ENCODE measurements at regions of chr12 and their contacts with region 1.

Region 1: GRCh38 chr12:101939856-101940265 is 62.5 kb downstream of the DRAM1 start:
- DNase-seq: peak; percentile 83
- ATAC-seq: peak; percentile 68
- H3K4me3 ChIP-seq: no peak overlapping the region
- H3K27ac ChIP-seq: no peak overlapping the region
- H3K4me1 ChIP-seq: peaks cover 13% of the 10 kb centered on the region
- H3K27me3 ChIP-seq: no peaks in the 10 kb centered on the region
- CTCF ChIP-seq: peak; percentile 94
- POLR2A ChIP-seq: no peak
- RAD21 ChIP-seq: peak; percentile 92

Region 2: GRCh38 chr12:102095675-102096263 is 155.9 kb after region 1 on chr12:
- CTCF ChIA-PET with region 1: interaction called, 6 read pairs
- POLR2A ChIA-PET with region 1: no interaction called
- dilution Hi-C with region 1: no loop called
- in situ Hi-C with region 1: no loop called
- intact Hi-C with region 1: loop called (anchors 1 kb)
- DNase-seq: peak; percentile 61
- ATAC-seq: peak; percentile 88
- H3K4me3 ChIP-seq: no peak overlapping the region
- H3K27ac ChIP-seq: no peak overlapping the region
- H3K4me1 ChIP-seq: peaks cover 3% of the 10 kb centered on the region; the same call in 1 of the 2 replicates
- H3K27me3 ChIP-seq: no peaks in the 10 kb centered on the region
- CTCF ChIP-seq: peak; percentile 57
- POLR2A ChIP-seq: no peak
- RAD21 ChIP-seq: peak; percentile 54

Region 3: GRCh38 chr12:102169922-102170621 is 230.2 kb after region 1 on chr12:
- CTCF ChIA-PET with region 1: no interaction called
- POLR2A ChIA-PET with region 1: no interaction called
- dilution Hi-C with region 1: no loop called
- in situ Hi-C with region 1: no loop called
- intact Hi-C with region 1: loop called (anchors 5 kb)
- DNase-seq: peak; percentile 63
- ATAC-seq: peak; percentile 74
- H3K4me3 ChIP-seq: no peak overlapping the region
- H3K27ac ChIP-seq: no peak overlapping the region
- H3K4me1 ChIP-seq: peaks cover 7% of the 10 kb centered on the region
- H3K27me3 ChIP-seq: no peaks in the 10 kb centered on the region
- CTCF ChIP-seq: peak; percentile 57
- POLR2A ChIP-seq: no peak
- RAD21 ChIP-seq: peak; percentile 53

Region 4: DNA sequence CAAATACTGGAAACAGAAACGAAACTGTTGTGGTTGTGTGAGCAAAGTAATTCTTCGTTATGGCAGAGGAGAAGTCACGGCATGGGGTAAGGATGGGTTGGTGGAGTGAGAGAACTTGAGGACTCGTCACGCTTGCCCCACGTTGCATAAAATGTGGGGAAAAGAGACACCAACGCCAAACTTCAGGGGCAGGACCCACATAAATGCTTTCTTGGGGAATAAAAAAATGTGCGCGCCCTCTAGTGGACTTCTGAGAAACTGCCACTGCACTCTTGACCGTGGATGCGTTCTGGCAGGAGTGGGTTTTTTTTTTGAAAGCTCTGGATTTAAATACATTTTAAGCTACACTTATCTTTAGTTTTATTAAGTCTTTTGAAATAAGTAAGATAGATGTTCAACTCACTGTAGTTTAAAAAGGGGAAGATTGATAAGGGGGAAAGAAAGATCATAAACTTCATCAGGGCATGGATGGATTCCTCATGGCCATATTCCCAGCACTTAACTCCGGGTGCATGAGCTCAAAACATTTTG is 544.6 kb after region 1 on chr12:
- CTCF ChIA-PET with region 1: interaction called, 4 read pairs
- POLR2A ChIA-PET with region 1: no interaction called
- dilution Hi-C with region 1: no loop called
- in situ Hi-C with region 1: loop called (anchors 25 kb)
- intact Hi-C with region 1: loop called (anchors 2 kb)
- DNase-seq: peak; percentile 41
- ATAC-seq: peak; percentile 51
- H3K4me3 ChIP-seq: no peak overlapping the region
- H3K27ac ChIP-seq: no peak overlapping the region
- H3K4me1 ChIP-seq: peaks cover 4% of the 10 kb centered on the region; the same call in 1 of the 2 replicates
- H3K27me3 ChIP-seq: no peaks in the 10 kb centered on the region
- CTCF ChIP-seq: peak; percentile 79
- POLR2A ChIP-seq: no peak
- RAD21 ChIP-seq: peak; percentile 64

Region 5: GRCh38 chr12:102702447-102703114 is 762.7 kb after region 1 on chr12:
- CTCF ChIA-PET with region 1: interaction called, 3 read pairs
- POLR2A ChIA-PET with region 1: no interaction called
- dilution Hi-C with region 1: no loop called
- in situ Hi-C with region 1: no loop called
- intact Hi-C with region 1: loop called (anchors 1 kb)
- DNase-seq: peak; percentile 65
- ATAC-seq: peak; percentile 78
- H3K4me3 ChIP-seq: no peak overlapping the region
- H3K27ac ChIP-seq: no peak overlapping the region
- H3K4me1 ChIP-seq: no peaks in the 10 kb centered on the region; the same call in 1 of the 2 replicates
- H3K27me3 ChIP-seq: peaks cover 1% of the 10 kb centered on the region; the same call in 1 of the 2 replicates
- CTCF ChIP-seq: peak; percentile 73
- POLR2A ChIP-seq: no peak
- RAD21 ChIP-seq: peak; percentile 76

Region 6: GRCh38 chr12:102769319-102769916 is 829.6 kb after region 1 on chr12:
- CTCF ChIA-PET with region 1: interaction called, 3 read pairs
- POLR2A ChIA-PET with region 1: interaction called, 5 read pairs
- dilution Hi-C with region 1: no loop called
- in situ Hi-C with region 1: no loop called
- intact Hi-C with region 1: loop called (anchors 1 kb)
- DNase-seq: peak; percentile 58
- ATAC-seq: peak; percentile 95
- H3K4me3 ChIP-seq: no peak overlapping the region
- H3K27ac ChIP-seq: no peak overlapping the region
- H3K4me1 ChIP-seq: no peaks in the 10 kb centered on the region
- H3K27me3 ChIP-seq: no peaks in the 10 kb centered on the region; the same call in 1 of the 2 replicates
- CTCF ChIP-seq: peak; percentile 73
- POLR2A ChIP-seq: no peak
- RAD21 ChIP-seq: peak; percentile 73

Region 7: GRCh38 chr12:103548622-103549601 is 1609.1 kb after region 1 on chr12:
- CTCF ChIA-PET with region 1: no interaction called
- POLR2A ChIA-PET with region 1: no interaction called
- dilution Hi-C with region 1: no loop called
- in situ Hi-C with region 1: no loop called
- intact Hi-C with region 1: loop called (anchors 2 kb)
- DNase-seq: peak; percentile 72
- ATAC-seq: peak; percentile 90
- H3K4me3 ChIP-seq: no peak overlapping the region
- H3K27ac ChIP-seq: no peak overlapping the region
- H3K4me1 ChIP-seq: no peaks in the 10 kb centered on the region
- H3K27me3 ChIP-seq: no peaks in the 10 kb centered on the region; the same call in 1 of the 2 replicates
- CTCF ChIP-seq: peak; percentile 94
- POLR2A ChIP-seq: no peak
- RAD21 ChIP-seq: peak; percentile 95